ENCODE measurements at regions of chr11 and their contacts with region 1.

Region 1: GRCh38 chr11:41309716-41310115 is 149.7 kb downstream of the LRRC4C start:
- DNase-seq: no peak
- ATAC-seq: no peak
- H3K4me3 ChIP-seq: no peak overlapping the region
- H3K27ac ChIP-seq: no peak overlapping the region
- H3K4me1 ChIP-seq: no peaks in the 10 kb centered on the region
- H3K27me3 ChIP-seq: no peaks in the 10 kb centered on the region
- CTCF ChIP-seq: no peak

Region 2: DNA sequence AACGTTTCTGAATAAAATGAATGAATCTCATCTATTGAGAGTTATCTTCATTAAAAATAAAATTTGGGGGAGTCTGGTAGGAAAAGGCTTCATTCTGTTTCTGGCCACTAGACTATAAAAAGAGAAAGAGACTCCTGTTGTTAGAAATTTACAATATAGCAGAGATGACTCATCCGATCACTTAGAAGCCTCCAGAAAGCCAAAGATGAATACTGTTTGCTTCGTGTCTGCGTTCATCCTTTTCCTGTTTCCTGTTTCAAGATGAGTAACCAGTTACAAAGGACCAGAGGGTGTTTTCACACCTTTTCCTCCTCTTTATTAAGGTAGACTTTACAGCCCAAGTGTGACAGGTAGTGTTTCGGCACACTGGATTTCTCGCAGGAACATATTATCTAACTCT is 971.0 kb before region 1 on chr11:
- intact Hi-C with region 1: loop called in 1 of 10 experiments (anchors 10 kb)
- DNase-seq: no peak
- ATAC-seq: no peak
- H3K4me3 ChIP-seq: no peak overlapping the region
- H3K27ac ChIP-seq: no peak overlapping the region
- H3K4me1 ChIP-seq: no peaks in the 10 kb centered on the region
- H3K27me3 ChIP-seq: no peaks in the 10 kb centered on the region
- CTCF ChIP-seq: no peak

Region 3: GRCh38 chr11:41081756-41082285 is 227.9 kb before region 1 on chr11:
- intact Hi-C with region 1: no loop called
- DNase-seq: no peak
- ATAC-seq: no peak
- H3K4me3 ChIP-seq: no peak overlapping the region
- H3K27ac ChIP-seq: no peak overlapping the region
- H3K4me1 ChIP-seq: no peaks in the 10 kb centered on the region
- H3K27me3 ChIP-seq: no peaks in the 10 kb centered on the region
- CTCF ChIP-seq: no peak

Region 4: GRCh38 chr11:41392596-41392995 is 82.9 kb after region 1 on chr11:
- intact Hi-C with region 1: no loop called
- DNase-seq: no peak
- ATAC-seq: no peak
- H3K4me3 ChIP-seq: no peak overlapping the region
- H3K27ac ChIP-seq: no peak overlapping the region
- H3K4me1 ChIP-seq: peaks cover 0 to 7% (median 0%) of the 10 kb centered on the region in 9 donors
- H3K27me3 ChIP-seq: no peaks in the 10 kb centered on the region
- CTCF ChIP-seq: no peak

Measured in heart right ventricle (tissue), 16 donors.